Ovary (tissue), 10 donors: ENCODE measurements at regions of chr11 and their contacts with region 1.

Region 1: GRCh38 chr11:108324587-108324986 is 101.7 kb downstream of the ATM start:
- DNase-seq: no peak
- H3K4me3 ChIP-seq: no peak overlapping the region
- H3K27ac ChIP-seq: no peak overlapping the region
- H3K4me1 ChIP-seq: no peaks in the 10 kb centered on the region
- H3K27me3 ChIP-seq: no peaks in the 10 kb centered on the region
- CTCF ChIP-seq: no peak
- EP300 ChIP-seq: no peak
- POLR2A ChIP-seq: no peak

Region 2: GRCh38 chr11:108289699-108290098 is 34.9 kb before region 1 on chr11:
- intact Hi-C with region 1: loop called in 1 of 4 experiments (anchors 5 kb)
- DNase-seq: no peak
- H3K4me3 ChIP-seq: no peak overlapping the region
- H3K27ac ChIP-seq: no peak overlapping the region
- H3K4me1 ChIP-seq: no peaks in the 10 kb centered on the region
- H3K27me3 ChIP-seq: no peaks in the 10 kb centered on the region
- CTCF ChIP-seq: no peak
- EP300 ChIP-seq: no peak
- POLR2A ChIP-seq: no peak